HepG2 (cell line): ENCODE measurements at regions of chr11 and their contacts with region 1.

Region 1: GRCh38 chr11:95150946-95151684 is 61.5 kb downstream of the ENDOD1 start:
- DNase-seq: peak; percentile 78
- ATAC-seq: peak; percentile 89
- H3K4me3 ChIP-seq: peak overlapping the region in 1 of 3 experiments; percentile 48; a peak in 1 of 6 replicates
- H3K27ac ChIP-seq: no peak overlapping the region
- H3K4me1 ChIP-seq: peaks cover 44% of the 10 kb centered on the region
- H3K27me3 ChIP-seq: no peaks in the 10 kb centered on the region; a peak in 1 of 5 replicates
- CTCF ChIP-seq: no peak; the same call in 1 of the 2 replicates
- EP300 ChIP-seq: no peak
- POLR2A ChIP-seq: no peak
- RAD21 ChIP-seq: peak; percentile 81

Region 2: GRCh38 chr11:94623120-94623735 is 527.9 kb before region 1 on chr11:
- CTCF ChIA-PET with region 1: no interaction called
- POLR2A ChIA-PET with region 1: no interaction called
- in situ Hi-C with region 1: loop called (anchors 25 kb)
- intact Hi-C with region 1: loop called (anchors 1 kb)
- DNase-seq: peak; percentile 74
- ATAC-seq: peak; percentile 97
- H3K4me3 ChIP-seq: no peak overlapping the region
- H3K27ac ChIP-seq: no peak overlapping the region
- H3K4me1 ChIP-seq: no peaks in the 10 kb centered on the region
- H3K27me3 ChIP-seq: no peaks in the 10 kb centered on the region
- CTCF ChIP-seq: peak; percentile 81
- EP300 ChIP-seq: no peak
- POLR2A ChIP-seq: no peak
- RAD21 ChIP-seq: peak; percentile 47

Region 3: GRCh38 chr11:95067039-95067840 is 83.9 kb before region 1 on chr11:
- CTCF ChIA-PET with region 1: interaction called, 7 read pairs
- POLR2A ChIA-PET with region 1: interaction called, 14 read pairs
- in situ Hi-C with region 1: no loop called
- intact Hi-C with region 1: loop called (anchors 1 kb)
- DNase-seq: peak; percentile 57
- ATAC-seq: peak; percentile 91
- H3K4me3 ChIP-seq: peak overlapping the region; percentile 80 to 97 (median 93)
- H3K27ac ChIP-seq: peak overlapping the region; percentile 93
- H3K4me1 ChIP-seq: peaks cover 18% of the 10 kb centered on the region
- H3K27me3 ChIP-seq: no peaks in the 10 kb centered on the region; a peak in 1 of 5 replicates
- CTCF ChIP-seq: peak; percentile 66
- EP300 ChIP-seq: no peak
- POLR2A ChIP-seq: peak; percentile 60 to 66
- RAD21 ChIP-seq: peak; percentile 24; the same call in 1 of the 2 replicates

Region 4: DNA sequence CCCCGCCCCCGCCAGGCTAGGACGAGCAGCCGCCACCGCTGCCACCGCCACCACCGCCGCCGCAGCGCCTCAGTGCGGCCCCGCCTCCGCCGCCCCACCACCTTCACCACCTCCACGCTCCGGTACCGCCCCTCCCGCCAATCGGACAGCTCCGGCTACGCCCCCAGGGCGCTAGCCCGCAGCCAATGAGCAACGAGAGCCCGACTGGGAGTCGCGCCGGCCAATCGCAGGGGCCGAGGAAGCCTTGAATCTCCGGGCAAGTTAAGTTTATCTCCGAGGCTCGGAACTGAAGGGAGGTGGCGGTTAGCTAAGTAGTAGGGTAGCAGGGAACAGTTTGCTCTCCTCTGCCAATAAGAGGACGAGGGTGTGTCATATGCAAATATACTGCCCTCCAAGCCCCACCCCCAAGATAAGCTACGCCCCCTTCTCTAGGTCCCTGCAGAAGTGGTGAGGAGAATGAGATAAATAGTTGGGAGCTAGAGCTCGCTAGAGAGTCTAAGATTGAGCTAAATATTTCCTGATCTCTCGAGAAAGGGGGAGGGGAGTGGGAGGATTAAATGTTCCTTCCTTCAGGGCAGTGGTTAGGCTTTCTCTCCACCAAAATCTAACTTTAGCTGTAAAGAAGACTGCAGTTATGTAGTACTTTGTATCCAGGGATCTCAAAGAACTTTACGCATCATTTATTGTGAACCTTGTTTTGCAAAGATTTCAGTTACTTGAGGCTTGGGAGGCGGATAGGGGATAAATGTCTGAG is 80.2 kb after region 1 on chr11 and contains the start of gene SESN3:
- CTCF ChIA-PET with region 1: no interaction called
- POLR2A ChIA-PET with region 1: no interaction called
- in situ Hi-C with region 1: no loop called
- intact Hi-C with region 1: loop called (anchors 2 kb)
- DNase-seq: peak; percentile 89
- ATAC-seq: peak; percentile 97
- H3K4me3 ChIP-seq: peak within 1 kb of the TSS; percentile 47 to 73 (median 62)
- H3K27ac ChIP-seq: no peak within 1 kb of the TSS
- H3K4me1 ChIP-seq: peaks cover 29% of the 10 kb centered on the region
- H3K27me3 ChIP-seq: peaks cover 0 to 36% of the 10 kb centered on the region in 2 experiments; a peak in 3 of 5 replicates
- CTCF ChIP-seq: 0 out of 2 replicates have a peak, but pooled peaks have one; percentile 8
- EP300 ChIP-seq: peak in 1 of 2 experiments; percentile 9; a peak in 1 of 4 replicates
- POLR2A ChIP-seq: no peak
- RAD21 ChIP-seq: no peak
- total RNA-seq, gene SESN3: 0.86 and 1.9 TPM in 2 replicates

Region 5: GRCh38 chr11:95705485-95706124 is 554.5 kb after region 1 on chr11:
- CTCF ChIA-PET with region 1: interaction called, 35 read pairs
- POLR2A ChIA-PET with region 1: no interaction called
- in situ Hi-C with region 1: loop called (anchors 5 kb)
- intact Hi-C with region 1: loop called (anchors 1 kb)
- DNase-seq: peak; percentile 55
- ATAC-seq: peak; percentile 99
- H3K4me3 ChIP-seq: no peak overlapping the region
- H3K27ac ChIP-seq: no peak overlapping the region
- H3K4me1 ChIP-seq: no peaks in the 10 kb centered on the region
- H3K27me3 ChIP-seq: peaks cover 3 to 11% of the 10 kb centered on the region in 2 experiments; a peak in 3 of 5 replicates
- CTCF ChIP-seq: peak; percentile 89
- EP300 ChIP-seq: no peak
- POLR2A ChIP-seq: no peak
- RAD21 ChIP-seq: peak; percentile 81

Region 6: GRCh38 chr11:96424693-96425092 is 1273.6 kb after region 1 on chr11:
- CTCF ChIA-PET with region 1: interaction called, 6 read pairs
- POLR2A ChIA-PET with region 1: no interaction called
- in situ Hi-C with region 1: no loop called
- intact Hi-C with region 1: loop called (anchors 2 kb)
- DNase-seq: no peak
- ATAC-seq: no peak
- H3K4me3 ChIP-seq: no peak overlapping the region
- H3K27ac ChIP-seq: no peak overlapping the region
- H3K4me1 ChIP-seq: no peaks in the 10 kb centered on the region; the same call in 1 of the 2 replicates
- H3K27me3 ChIP-seq: 0 out of 5 replicates have a peak, but pooled peaks cover 0 to 3% of the 10 kb centered on the region in 2 experiments
- CTCF ChIP-seq: no peak
- EP300 ChIP-seq: no peak
- POLR2A ChIP-seq: no peak
- RAD21 ChIP-seq: no peak